ENCODE measurements at regions of chr15 and their contacts with region 1.

Region 1: DNA sequence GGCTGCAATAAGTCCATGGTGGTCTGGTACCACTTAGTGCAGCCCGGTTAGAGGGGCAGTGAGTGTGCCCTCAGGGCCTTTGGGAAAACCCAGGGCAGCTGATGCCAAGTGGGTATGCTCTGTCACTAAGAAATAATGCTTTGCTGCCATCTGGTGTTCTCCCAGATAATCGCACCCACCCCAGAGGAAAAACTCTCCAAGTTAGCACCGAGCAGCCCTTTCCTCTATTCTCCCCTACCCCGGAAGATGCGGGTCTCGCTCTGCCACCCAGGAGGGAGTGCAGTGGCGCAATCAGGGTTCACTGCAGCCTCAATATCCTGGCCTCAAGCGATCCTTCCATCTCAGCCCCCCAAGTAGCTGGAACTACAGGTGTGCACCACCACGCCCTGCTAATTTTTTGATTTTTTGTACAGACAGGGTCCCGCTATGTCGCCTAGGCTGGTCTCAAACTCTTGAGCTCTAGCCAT is 21.3 kb upstream of the DAPK2 start:
- DNase-seq: peak; percentile 81
- H3K4me3 ChIP-seq: peak overlapping the region; percentile 9
- H3K27ac ChIP-seq: no peak overlapping the region
- H3K4me1 ChIP-seq: peaks cover 17% of the 10 kb centered on the region
- CTCF ChIP-seq: peak; percentile 87

Region 2: DNA sequence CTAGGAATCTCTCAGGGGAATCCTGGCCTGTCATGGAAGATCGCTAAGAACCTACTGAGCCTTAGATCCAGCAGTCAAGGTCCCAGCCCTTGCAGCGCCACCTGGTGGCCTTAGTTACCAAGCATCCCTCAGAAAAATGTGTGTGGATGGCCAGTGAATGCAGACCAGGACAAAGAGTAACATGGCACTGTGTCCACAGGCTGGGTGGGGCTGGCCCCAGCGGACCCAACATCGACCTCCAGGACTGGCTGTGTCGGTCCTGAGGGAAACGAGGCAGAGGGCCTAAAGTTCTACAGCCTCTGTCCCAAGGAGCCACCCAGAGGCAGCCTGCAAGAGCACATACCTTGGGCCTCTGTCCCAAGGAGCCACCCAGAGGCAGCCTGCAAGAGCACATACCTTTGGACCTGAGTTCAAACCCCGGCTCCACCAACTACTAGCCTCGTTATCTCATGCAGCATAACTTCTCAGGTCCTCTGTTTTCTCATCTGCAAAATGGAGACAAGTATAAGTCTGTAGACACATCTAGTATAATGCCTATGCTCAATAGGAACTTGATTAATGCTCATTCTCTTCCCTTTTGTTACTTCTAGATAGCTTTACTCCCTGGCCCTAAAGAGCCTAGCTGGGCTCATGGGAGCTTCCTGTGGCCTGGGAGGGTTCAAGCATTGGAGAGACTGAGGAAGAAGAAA is 176.4 kb before region 1 on chr15:
- CTCF ChIA-PET with region 1: no interaction called
- POLR2A ChIA-PET with region 1: no interaction called
- intact Hi-C with region 1: loop called (anchors 2 kb)
- DNase-seq: peak; percentile 75
- H3K4me3 ChIP-seq: no peak overlapping the region
- H3K27ac ChIP-seq: no peak overlapping the region
- H3K4me1 ChIP-seq: peaks cover 20% of the 10 kb centered on the region
- CTCF ChIP-seq: peak; percentile 99